ENCODE measurements at regions of chr19 and their contacts with region 1.

Region 1: GRCh38 chr19:17703824-17704463 is 15.3 kb upstream of the MAP1S start:
- DNase-seq: peak; percentile 57 to 89 (median 76)

Region 2: GRCh38 chr19:17658666-17659065 is 45.3 kb before region 1 on chr19:
- intact Hi-C with region 1: no loop called
- DNase-seq: no peak

Region 3: GRCh38 chr19:17766543-17767131 is 62.7 kb after region 1 on chr19:
- intact Hi-C with region 1: loop called (anchors 5 kb)
- DNase-seq: peak; percentile 78 to 93 (median 86)

Region 4: GRCh38 chr19:17784201-17785008 is 80.5 kb after region 1 on chr19:
- intact Hi-C with region 1: loop called (anchors 5 kb)
- DNase-seq: peak; percentile 58 to 90 (median 80)

Measured in head of caudate nucleus (tissue), 42 donors.